Ascending aorta (tissue), 2 donors: ENCODE measurements at regions of chr15 and their contacts with region 1.

Region 1: DNA sequence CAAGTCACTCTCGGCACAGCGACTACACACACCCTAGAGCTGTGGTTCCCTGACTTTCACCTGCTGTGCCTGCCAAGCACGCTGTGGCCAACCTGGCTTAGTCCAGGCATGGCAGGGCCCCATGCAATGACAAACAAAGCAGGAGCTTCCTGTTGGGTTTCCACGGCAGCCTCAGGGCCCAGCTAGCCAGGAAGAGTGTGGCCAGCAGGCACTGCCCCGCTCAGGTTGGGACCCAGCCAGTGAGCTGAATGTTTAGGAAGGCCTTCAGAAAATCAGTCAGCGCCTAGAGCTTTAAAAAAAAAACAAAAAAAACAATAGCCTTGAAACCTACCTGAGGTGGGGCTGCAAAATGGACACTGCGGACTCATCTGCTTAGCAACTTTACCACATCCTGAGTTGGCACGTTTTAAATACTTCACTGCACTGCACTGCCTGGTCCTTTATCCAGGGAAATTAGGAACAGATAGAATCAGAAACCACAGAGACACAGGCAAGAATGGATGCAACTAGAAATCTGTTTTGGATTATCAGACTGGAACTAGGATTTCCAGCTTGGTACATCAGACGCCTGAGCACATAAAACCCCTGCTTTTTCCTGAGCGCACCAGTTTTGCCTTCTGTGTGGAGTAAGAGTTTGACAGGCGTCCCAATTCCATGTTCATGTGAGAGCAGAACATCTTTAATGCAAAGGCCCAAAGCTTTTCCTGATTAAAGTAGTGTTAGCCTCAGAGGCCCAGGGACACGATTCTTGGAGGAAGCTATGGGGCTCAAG is 36.2 kb upstream of the LDHAL6B start:
- DNase-seq: peak; percentile 84 to 91
- H3K4me3 ChIP-seq: no peak overlapping the region
- H3K27ac ChIP-seq: peak overlapping the region; percentile 92 to 97
- H3K4me1 ChIP-seq: peaks cover 12 to 55% of the 10 kb centered on the region in 2 donors
- H3K27me3 ChIP-seq: no peaks in the 10 kb centered on the region
- CTCF ChIP-seq: no peak

Region 2: GRCh38 chr15:59221511-59222505 is 51.3 kb after region 1 on chr15:
- intact Hi-C with region 1: no loop called
- DNase-seq: no peak
- H3K4me3 ChIP-seq: no peak overlapping the region
- H3K27ac ChIP-seq: peak overlapping the region; percentile 55 to 66
- H3K4me1 ChIP-seq: peaks cover 0 to 10% of the 10 kb centered on the region in 2 donors
- H3K27me3 ChIP-seq: no peaks in the 10 kb centered on the region
- CTCF ChIP-seq: no peak

Region 3: GRCh38 chr15:59232476-59232875 is 62.0 kb after region 1 on chr15:
- intact Hi-C with region 1: loop called (anchors 5 kb)
- DNase-seq: no peak
- H3K4me3 ChIP-seq: no peak overlapping the region
- H3K27ac ChIP-seq: peak overlapping the region; percentile 32 to 46
- H3K4me1 ChIP-seq: peaks cover 0 to 16% of the 10 kb centered on the region in 2 donors
- H3K27me3 ChIP-seq: no peaks in the 10 kb centered on the region
- CTCF ChIP-seq: no peak

Region 4: DNA sequence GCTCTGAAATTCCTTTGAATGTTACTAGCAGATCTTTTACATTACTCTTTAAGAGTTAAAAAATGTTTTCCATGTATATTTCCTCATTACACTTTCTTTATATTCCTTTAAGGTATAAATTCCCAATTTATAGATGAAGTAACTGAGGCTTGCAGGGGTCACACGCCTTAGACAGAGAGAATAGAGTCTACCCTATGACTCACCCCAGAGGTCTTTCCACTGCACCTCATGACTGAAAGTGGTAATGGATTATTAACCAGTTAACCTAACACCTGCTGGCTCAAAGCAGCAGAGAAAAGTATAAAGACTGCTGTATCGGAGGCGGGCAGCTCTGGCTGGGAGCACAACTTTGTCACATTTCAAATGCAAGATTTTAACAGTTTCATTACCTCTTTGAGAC is 73.9 kb after region 1 on chr15:
- intact Hi-C with region 1: no loop called
- DNase-seq: no peak
- H3K4me3 ChIP-seq: no peak overlapping the region
- H3K27ac ChIP-seq: no peak overlapping the region
- H3K4me1 ChIP-seq: peaks cover 0 to 10% of the 10 kb centered on the region in 2 donors
- H3K27me3 ChIP-seq: no peaks in the 10 kb centered on the region
- CTCF ChIP-seq: no peak

Region 5: GRCh38 chr15:59294568-59295260 is 124.2 kb after region 1 on chr15:
- intact Hi-C with region 1: loop called (anchors 5 kb)
- DNase-seq: no peak
- H3K4me3 ChIP-seq: peak overlapping the region in 1 of 2 donors; percentile 18
- H3K27ac ChIP-seq: peak overlapping the region; percentile 88
- H3K4me1 ChIP-seq: peaks cover 24 to 40% of the 10 kb centered on the region in 2 donors
- H3K27me3 ChIP-seq: no peaks in the 10 kb centered on the region
- CTCF ChIP-seq: no peak

Region 6: GRCh38 chr15:59306520-59307164 is 136.2 kb after region 1 on chr15:
- intact Hi-C with region 1: loop called (anchors 5 kb)
- DNase-seq: peak in 1 of 2 donors; percentile 84
- H3K4me3 ChIP-seq: no peak overlapping the region
- H3K27ac ChIP-seq: peak overlapping the region; percentile 70 to 84
- H3K4me1 ChIP-seq: peaks cover 11 to 31% of the 10 kb centered on the region in 2 donors
- H3K27me3 ChIP-seq: no peaks in the 10 kb centered on the region
- CTCF ChIP-seq: no peak

Region 7: DNA sequence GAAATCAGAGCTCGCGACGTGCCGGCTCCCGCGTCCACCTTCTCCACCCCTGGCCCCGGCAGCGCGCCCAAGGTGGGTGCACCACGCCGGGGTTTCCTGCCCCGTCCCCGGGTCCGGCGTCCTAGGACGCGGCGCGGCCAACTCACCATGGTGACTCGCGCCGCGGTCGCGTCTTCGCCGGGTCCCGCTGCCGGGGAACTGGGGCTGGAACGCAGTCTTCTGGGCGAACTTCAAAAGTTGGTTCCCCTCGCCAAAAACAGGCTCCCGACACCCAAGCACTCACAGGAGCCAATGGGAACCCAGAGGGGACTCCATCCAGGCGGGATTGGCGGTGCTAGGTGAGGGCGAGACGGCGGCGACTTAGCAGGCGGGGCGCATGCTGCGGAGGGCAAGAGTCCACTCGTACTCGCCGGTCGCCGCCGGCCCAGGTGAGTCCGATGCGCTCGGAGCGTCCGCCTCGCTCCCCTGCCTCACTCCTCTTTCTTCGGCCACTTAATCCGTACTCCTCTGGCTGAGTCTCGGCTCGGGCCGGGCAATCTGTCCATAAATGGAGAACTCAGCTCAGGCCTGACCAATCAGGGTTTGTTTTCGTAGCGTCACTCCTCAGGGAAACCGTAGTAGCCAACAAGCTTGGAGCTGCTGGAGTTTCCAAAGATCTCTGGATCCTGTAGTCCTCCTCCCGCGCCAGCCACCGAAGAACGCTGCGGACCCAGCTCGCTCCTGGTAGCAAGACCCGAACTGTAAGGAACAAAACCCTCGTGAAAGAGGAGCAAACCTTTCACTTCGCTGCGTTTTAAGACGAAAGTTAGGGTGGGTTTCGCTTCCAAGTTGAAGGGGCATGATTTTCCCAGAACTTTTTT is 202.1 kb after region 1 on chr15 and contains the start of gene MYO1E:
- intact Hi-C with region 1: loop called (anchors 2 kb)
- DNase-seq: peak; percentile 78 to 95
- H3K4me3 ChIP-seq: peak within 1 kb of the TSS; percentile 73 to 99
- H3K27ac ChIP-seq: peak within 1 kb of the TSS; percentile 91 to 99
- H3K4me1 ChIP-seq: no peaks in the 10 kb centered on the region
- H3K27me3 ChIP-seq: no peaks in the 10 kb centered on the region
- CTCF ChIP-seq: no peak
- total RNA-seq, gene MYO1E: 48.0 TPM

Region 8: GRCh38 chr15:59437817-59438562 is 267.5 kb after region 1 on chr15 and contains the start of gene FAM81A:
- intact Hi-C with region 1: loop called (anchors 2 kb)
- DNase-seq: peak; percentile 11 to 92
- H3K4me3 ChIP-seq: peak within 1 kb of the TSS; percentile 59 to 83
- H3K27ac ChIP-seq: peak within 1 kb of the TSS in 1 of 2 donors; percentile 15
- H3K4me1 ChIP-seq: peaks cover 0 to 12% of the 10 kb centered on the region in 2 donors
- H3K27me3 ChIP-seq: no peaks in the 10 kb centered on the region
- CTCF ChIP-seq: no peak
- total RNA-seq, gene FAM81A: not detected